AG04450 (cell line): ENCODE measurements at regions of chr14 and their contacts with region 1.

Region 1: GRCh38 chr14:80996049-80996901 is 40.9 kb downstream of the TSHR start:
- DNase-seq: peak; percentile 64
- H3K4me3 ChIP-seq: no peak overlapping the region
- H3K27ac ChIP-seq: no peak overlapping the region
- H3K27me3 ChIP-seq: peaks cover 2% of the 10 kb centered on the region
- CTCF ChIP-seq: peak; percentile 89

Region 2: DNA sequence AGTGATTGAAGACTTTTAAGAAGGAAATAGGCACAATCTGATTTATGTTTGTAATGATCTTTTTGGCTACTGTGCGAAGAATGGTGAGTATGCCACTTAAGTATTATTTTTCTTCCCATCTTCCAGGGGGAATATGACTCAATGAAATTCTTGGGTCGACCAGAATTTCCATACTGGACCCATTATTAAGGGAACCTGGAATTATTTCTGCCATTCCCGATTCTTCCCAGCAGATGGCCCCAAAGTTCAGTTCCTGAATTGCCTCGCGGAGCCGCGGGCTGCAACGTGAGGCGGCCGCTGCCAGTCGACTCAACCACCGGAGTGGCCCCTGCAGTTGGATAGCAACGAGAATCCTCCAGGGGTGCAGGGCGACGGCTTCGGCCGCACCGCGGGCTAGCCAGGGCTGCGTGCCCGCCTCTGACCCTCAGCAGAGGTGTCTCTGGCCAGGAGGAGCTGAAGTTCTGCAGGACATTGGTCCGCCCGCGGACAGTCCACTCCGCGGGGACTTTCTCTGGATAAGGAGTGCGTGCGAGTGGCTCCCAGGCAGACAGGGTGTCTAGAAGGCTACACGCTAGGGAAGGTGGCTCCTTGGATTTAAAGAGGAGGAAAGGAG is 41.5 kb before region 1 on chr14:
- CTCF ChIA-PET with region 1: interaction called, 13 read pairs
- POLR2A ChIA-PET with region 1: no interaction called
- DNase-seq: peak; percentile 42
- H3K4me3 ChIP-seq: peak overlapping the region; percentile 71
- H3K27ac ChIP-seq: no peak overlapping the region
- H3K27me3 ChIP-seq: peaks cover 8% of the 10 kb centered on the region
- CTCF ChIP-seq: peak; percentile 85

Region 3: GRCh38 chr14:81009346-81009745 is 13.1 kb after region 1 on chr14:
- CTCF ChIA-PET with region 1: interaction called, 11 read pairs
- POLR2A ChIA-PET with region 1: no interaction called
- DNase-seq: no peak
- H3K4me3 ChIP-seq: no peak overlapping the region
- H3K27ac ChIP-seq: no peak overlapping the region
- H3K27me3 ChIP-seq: no peaks in the 10 kb centered on the region
- CTCF ChIP-seq: no peak

Region 4: GRCh38 chr14:81122326-81122725 is 126.1 kb after region 1 on chr14:
- CTCF ChIA-PET with region 1: no interaction called
- POLR2A ChIA-PET with region 1: no interaction called
- DNase-seq: no peak
- H3K4me3 ChIP-seq: no peak overlapping the region
- H3K27ac ChIP-seq: no peak overlapping the region
- H3K27me3 ChIP-seq: no peaks in the 10 kb centered on the region
- CTCF ChIP-seq: no peak

Region 5: DNA sequence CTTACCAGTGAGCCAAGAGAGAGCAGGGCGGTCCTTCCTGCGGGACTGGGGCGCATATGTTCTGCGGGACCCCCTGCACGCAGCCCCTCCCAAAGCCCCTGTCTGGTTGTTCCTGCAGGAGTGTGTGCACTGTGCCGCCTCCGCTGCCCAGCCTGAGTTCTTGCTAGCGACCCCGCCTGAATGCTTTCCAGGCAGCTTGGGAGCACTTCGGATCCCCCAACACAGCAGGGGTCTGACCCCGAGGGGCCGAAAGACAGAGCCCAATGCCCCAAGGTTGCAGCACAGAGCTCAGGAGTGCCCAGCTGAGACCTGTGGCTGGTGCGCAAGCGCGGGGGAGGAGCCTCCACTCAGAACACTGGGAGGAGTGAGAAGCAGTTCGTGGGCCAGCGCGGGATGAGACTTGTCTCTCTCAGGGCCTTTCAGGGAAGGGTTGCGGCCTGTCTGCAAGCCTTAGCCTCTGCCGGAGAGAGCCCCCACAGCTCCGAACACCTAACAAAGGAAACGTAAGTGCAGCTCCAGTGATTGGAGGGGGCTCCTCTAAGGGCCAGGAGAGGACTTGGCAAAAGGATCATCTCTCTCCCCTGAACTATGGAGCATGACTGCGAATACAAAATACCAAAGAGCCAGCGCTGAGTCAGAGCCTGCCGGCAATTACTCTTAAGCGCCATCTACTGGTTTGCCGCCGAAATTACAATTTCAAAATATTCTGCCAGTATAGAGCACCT is 174.0 kb after region 1 on chr14:
- CTCF ChIA-PET with region 1: interaction called, 85 read pairs
- POLR2A ChIA-PET with region 1: no interaction called
- DNase-seq: peak; percentile 67
- H3K4me3 ChIP-seq: peak overlapping the region; percentile 78
- H3K27ac ChIP-seq: peak overlapping the region; percentile 96
- H3K27me3 ChIP-seq: no peaks in the 10 kb centered on the region
- CTCF ChIP-seq: peak; percentile 95

Region 6: GRCh38 chr14:81464247-81465002 is 468.1 kb after region 1 on chr14:
- CTCF ChIA-PET with region 1: interaction called, 29 read pairs
- POLR2A ChIA-PET with region 1: no interaction called
- DNase-seq: peak; percentile 30
- H3K4me3 ChIP-seq: peak overlapping the region; percentile 62
- H3K27ac ChIP-seq: no peak overlapping the region
- H3K27me3 ChIP-seq: no peaks in the 10 kb centered on the region
- CTCF ChIP-seq: peak; percentile 88